ENCODE measurements at regions of chr7 and their contacts with region 1.

Region 1: GRCh38 chr7:144908943-144909556 is 73.2 kb upstream of the TPK1 start:
- DNase-seq: no peak
- ATAC-seq: no peak
- H3K4me3 ChIP-seq: no peak overlapping the region
- H3K4me3 Mint-ChIP-seq: no peak overlapping the region
- H3K27ac ChIP-seq: no peak overlapping the region
- H3K27ac Mint-ChIP-seq: no peak overlapping the region
- H3K4me1 ChIP-seq: no peaks in the 10 kb centered on the region
- H3K4me1 Mint-ChIP-seq: peaks cover 10 to 14% (median 11%) of the 10 kb centered on the region in 3 donors
- H3K27me3 ChIP-seq: peaks cover 0 to 3% of the 10 kb centered on the region in 2 experiments
- H3K27me3 Mint-ChIP-seq: no peaks in the 10 kb centered on the region

Region 2: GRCh38 chr7:143882611-143883078 is 1026.4 kb before region 1 on chr7:
- CTCF ChIA-PET with region 1: no interaction called
- POLR2A ChIA-PET with region 1: no interaction called
- DNase-seq: no peak
- ATAC-seq: no peak
- H3K4me3 ChIP-seq: peak overlapping the region in 1 of 2 donors; percentile 46
- H3K4me3 Mint-ChIP-seq: peak overlapping the region in 2 of 3 donors; percentile 22 to 67
- H3K27ac ChIP-seq: no peak overlapping the region
- H3K27ac Mint-ChIP-seq: no peak overlapping the region
- H3K4me1 ChIP-seq: peaks cover 8 to 15% of the 10 kb centered on the region in 2 experiments
- H3K4me1 Mint-ChIP-seq: peaks cover 19 to 38% (median 26%) of the 10 kb centered on the region in 3 donors
- H3K27me3 ChIP-seq: peaks cover 0 to 34% of the 10 kb centered on the region in 2 experiments
- H3K27me3 Mint-ChIP-seq: peaks cover 39 to 41% of the 10 kb centered on the region in 2 donors

Region 3: GRCh38 chr7:144454256-144455039 is 454.6 kb before region 1 on chr7:
- CTCF ChIA-PET with region 1: no interaction called
- POLR2A ChIA-PET with region 1: no interaction called
- DNase-seq: no peak
- ATAC-seq: no peak
- H3K4me3 ChIP-seq: no peak overlapping the region
- H3K4me3 Mint-ChIP-seq: no peak overlapping the region
- H3K27ac ChIP-seq: no peak overlapping the region
- H3K27ac Mint-ChIP-seq: no peak overlapping the region
- H3K4me1 ChIP-seq: no peaks in the 10 kb centered on the region
- H3K4me1 Mint-ChIP-seq: no peaks in the 10 kb centered on the region
- H3K27me3 ChIP-seq: no peaks in the 10 kb centered on the region
- H3K27me3 Mint-ChIP-seq: no peaks in the 10 kb centered on the region

Region 4: DNA sequence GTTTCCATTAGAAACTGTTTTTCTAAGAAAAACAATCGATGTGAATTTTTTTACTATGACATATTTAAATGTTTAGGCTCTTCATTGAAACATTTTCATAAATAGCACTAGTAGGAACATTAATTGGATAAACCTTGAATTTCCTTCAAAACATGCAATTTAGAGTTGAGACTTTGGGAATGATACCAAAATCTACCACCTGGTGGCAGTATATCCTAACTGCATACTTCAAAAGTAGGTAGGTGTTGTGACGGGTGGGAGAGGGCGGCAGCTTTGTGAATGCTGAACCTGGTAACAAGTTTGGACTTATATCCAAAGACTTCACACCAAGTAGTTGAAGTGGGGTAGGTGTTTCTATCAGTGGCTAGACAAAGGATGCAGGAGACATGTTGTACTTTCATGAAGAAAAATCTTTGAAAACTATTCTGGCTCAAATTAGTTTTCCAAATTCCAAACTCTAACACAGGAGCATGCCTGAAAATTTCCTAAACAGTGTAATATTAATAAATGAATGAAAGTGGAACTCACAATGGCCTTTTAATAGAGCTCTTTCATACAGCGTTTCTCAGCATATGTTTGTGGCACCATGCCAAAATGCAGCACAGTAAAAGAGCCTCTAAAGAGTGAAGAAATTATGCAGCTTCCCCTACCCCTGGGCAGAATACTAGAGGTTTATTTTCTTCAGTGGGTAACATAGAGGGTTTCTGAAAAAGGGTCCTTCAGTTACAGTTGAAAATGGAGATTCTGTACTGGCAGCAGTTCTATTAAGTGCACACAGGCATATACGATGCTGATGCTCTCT is 127.8 kb after region 1 on chr7:
- CTCF ChIA-PET with region 1: no interaction called
- POLR2A ChIA-PET with region 1: interaction called in 1 of 2 experiments, 11 read pairs
- DNase-seq: peak in 26 of 35 experiments; percentile 1 to 66 (median 14)
- ATAC-seq: peak in 3 of 4 experiments; percentile 41 to 67 (median 63)
- H3K4me3 ChIP-seq: no peak overlapping the region
- H3K4me3 Mint-ChIP-seq: peak overlapping the region in 1 of 3 donors; percentile 54
- H3K27ac ChIP-seq: no peak overlapping the region
- H3K27ac Mint-ChIP-seq: no peak overlapping the region
- H3K4me1 ChIP-seq: no peaks in the 10 kb centered on the region
- H3K4me1 Mint-ChIP-seq: peaks cover 0 to 2% (median 2%) of the 10 kb centered on the region in 3 donors
- H3K27me3 ChIP-seq: no peaks in the 10 kb centered on the region
- H3K27me3 Mint-ChIP-seq: peaks cover 8 to 31% of the 10 kb centered on the region in 2 donors

Region 5: GRCh38 chr7:145350334-145350733 is 441.3 kb after region 1 on chr7:
- CTCF ChIA-PET with region 1: no interaction called
- POLR2A ChIA-PET with region 1: no interaction called
- DNase-seq: no peak
- ATAC-seq: no peak
- H3K4me3 ChIP-seq: no peak overlapping the region
- H3K4me3 Mint-ChIP-seq: no peak overlapping the region
- H3K27ac ChIP-seq: no peak overlapping the region
- H3K27ac Mint-ChIP-seq: no peak overlapping the region
- H3K4me1 ChIP-seq: no peaks in the 10 kb centered on the region
- H3K4me1 Mint-ChIP-seq: no peaks in the 10 kb centered on the region
- H3K27me3 ChIP-seq: no peaks in the 10 kb centered on the region
- H3K27me3 Mint-ChIP-seq: no peaks in the 10 kb centered on the region

Measured in T-cell (primary cell).